Activated CD4-positive, alpha-beta T cell treated with anti-CD3 and anti-CD28 coated beads, Interleukin-2, amount 10 ng/mL, durations not matched to agents 24 days and 14 days (primary cell): ENCODE measurements at regions of chr16 and their contacts with region 1.

Region 1: GRCh38 chr16:20822521-20823325 is 16.4 kb downstream of the REXO5 start:
- DNase-seq: no peak
- H3K4me3 Mint-ChIP-seq: peak overlapping the region; percentile 3
- H3K27ac Mint-ChIP-seq: peak overlapping the region; percentile 56
- H3K4me1 Mint-ChIP-seq: peaks cover 10% of the 10 kb centered on the region
- H3K27me3 Mint-ChIP-seq: no peaks in the 10 kb centered on the region

Region 2: DNA sequence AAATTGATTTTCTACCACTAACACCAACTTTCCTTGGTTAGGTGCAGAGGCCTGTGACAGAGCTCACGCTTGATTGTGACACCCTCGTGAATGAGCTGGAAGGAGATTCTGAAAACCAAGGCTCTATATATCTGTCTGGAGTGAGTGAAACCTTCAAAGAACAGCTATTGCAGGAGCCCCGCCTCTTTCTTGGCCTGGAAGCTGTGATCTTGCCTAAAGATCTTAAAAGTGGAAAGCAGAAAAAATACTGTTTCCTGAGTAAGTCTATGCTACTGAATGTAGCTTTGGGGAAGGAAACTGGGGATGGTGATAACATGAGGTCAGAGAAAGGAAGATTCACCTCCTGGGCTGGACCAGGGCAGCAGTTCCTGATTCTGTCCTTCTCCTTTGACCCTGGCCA is 21.9 kb after region 1 on chr16:
- intact Hi-C with region 1: loop called (anchors 1 kb)
- DNase-seq: peak; percentile 74
- H3K4me3 Mint-ChIP-seq: peak overlapping the region; percentile 59
- H3K27ac Mint-ChIP-seq: peak overlapping the region; percentile 89
- H3K4me1 Mint-ChIP-seq: peaks cover 27% of the 10 kb centered on the region
- H3K27me3 Mint-ChIP-seq: no peaks in the 10 kb centered on the region

Region 3: GRCh38 chr16:20866145-20866772 is 43.5 kb after region 1 on chr16:
- intact Hi-C with region 1: no loop called
- DNase-seq: no peak
- H3K4me3 Mint-ChIP-seq: no peak overlapping the region
- H3K27ac Mint-ChIP-seq: peak overlapping the region; percentile 72
- H3K4me1 Mint-ChIP-seq: peaks cover 41% of the 10 kb centered on the region
- H3K27me3 Mint-ChIP-seq: no peaks in the 10 kb centered on the region